Endothelial cell of umbilical vein (primary cell): ENCODE measurements at regions of chr3 and their contacts with region 1.

Region 1: GRCh38 chr3:37279236-37279635 is 104.9 kb upstream of the LRRFIP2 start:
- DNase-seq: no peak
- H3K4me3 ChIP-seq: no peak overlapping the region
- H3K27ac ChIP-seq: peak overlapping the region; percentile 44
- H3K4me1 ChIP-seq: peaks cover 27% of the 10 kb centered on the region
- H3K27me3 ChIP-seq: no peaks in the 10 kb centered on the region
- CTCF ChIP-seq: no peak
- POLR2A ChIP-seq: no peak

Region 2: DNA sequence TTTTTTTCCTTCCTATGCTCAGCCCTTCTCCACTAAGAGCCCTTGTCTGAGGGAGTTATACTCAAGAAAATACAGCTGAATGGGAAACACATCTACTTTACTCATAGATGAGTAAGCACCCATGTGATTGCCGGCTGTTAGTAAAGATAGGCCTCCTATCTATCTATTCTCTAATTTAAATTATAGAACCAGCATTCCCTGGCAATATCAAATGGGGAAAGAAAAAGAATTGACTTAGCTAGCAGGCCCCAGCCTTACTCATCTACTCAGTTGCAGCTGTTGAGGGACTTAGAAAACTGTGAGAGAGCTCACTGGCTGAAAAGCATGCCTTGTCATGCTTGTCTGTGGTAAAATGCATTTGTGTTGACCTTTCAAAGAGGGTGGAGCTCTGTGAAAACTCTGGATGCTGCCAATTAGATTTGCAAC is 12.1 kb after region 1 on chr3:
- CTCF ChIA-PET with region 1: interaction called, 4 read pairs
- POLR2A ChIA-PET with region 1: no interaction called
- dilution Hi-C with region 1: no loop called
- intact Hi-C with region 1: loop called (anchors 1 kb)
- DNase-seq: peak; percentile 34
- H3K4me3 ChIP-seq: no peak overlapping the region
- H3K27ac ChIP-seq: peak overlapping the region; percentile 11
- H3K4me1 ChIP-seq: peaks cover 26% of the 10 kb centered on the region
- H3K27me3 ChIP-seq: no peaks in the 10 kb centered on the region
- CTCF ChIP-seq: no peak
- POLR2A ChIP-seq: no peak